Left lung (tissue), 14 donors: ENCODE measurements at regions of chr17 and their contacts with region 1.

Region 1: DNA sequence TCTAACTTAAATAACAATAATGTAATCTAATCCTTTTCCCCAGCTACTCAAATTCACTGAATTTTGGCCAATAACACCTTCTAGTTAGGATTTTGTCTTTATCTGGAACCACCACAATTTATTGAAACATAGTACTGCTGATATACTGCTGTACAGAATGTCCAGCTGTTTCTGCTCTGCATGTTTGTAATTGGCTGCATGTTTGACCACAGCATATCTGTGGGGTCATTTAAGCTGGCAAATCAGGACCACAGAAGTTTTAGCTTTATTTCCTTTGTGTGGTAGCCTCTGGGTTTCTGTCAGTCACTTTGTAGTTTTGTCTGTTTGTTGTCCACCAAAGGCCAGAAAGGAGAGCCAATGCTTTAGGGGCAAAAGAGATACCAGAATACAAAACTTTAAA is 22.2 kb upstream of the RAB11FIP4 start:
- DNase-seq: peak in 1 of 4 donors; percentile 45
- ATAC-seq: no peak
- H3K4me3 ChIP-seq: no peak overlapping the region
- H3K27ac ChIP-seq: no peak overlapping the region
- H3K4me1 ChIP-seq: peaks cover 0 to 27% of the 10 kb centered on the region in 2 donors
- H3K27me3 ChIP-seq: no peaks in the 10 kb centered on the region
- CTCF ChIP-seq: no peak

Region 2: GRCh38 chr17:31231852-31232251 is 137.4 kb before region 1 on chr17:
- intact Hi-C with region 1: loop called in 1 of 2 experiments (anchors 10 kb)
- DNase-seq: no peak
- ATAC-seq: no peak
- H3K4me3 ChIP-seq: no peak overlapping the region
- H3K27ac ChIP-seq: no peak overlapping the region
- H3K4me1 ChIP-seq: no peaks in the 10 kb centered on the region
- H3K27me3 ChIP-seq: no peaks in the 10 kb centered on the region
- CTCF ChIP-seq: no peak